ENCODE measurements at regions of chr3 and their contacts with region 1.

Region 1: GRCh38 chr3:188788621-188789081 is 383.1 kb upstream of the TPRG1 start:
- DNase-seq: peak; percentile 49
- H3K4me3 Mint-ChIP-seq: no peak overlapping the region
- H3K27ac Mint-ChIP-seq: no peak overlapping the region
- H3K4me1 Mint-ChIP-seq: peaks cover 6% of the 10 kb centered on the region
- H3K27me3 Mint-ChIP-seq: peaks cover 8% of the 10 kb centered on the region

Region 2: DNA sequence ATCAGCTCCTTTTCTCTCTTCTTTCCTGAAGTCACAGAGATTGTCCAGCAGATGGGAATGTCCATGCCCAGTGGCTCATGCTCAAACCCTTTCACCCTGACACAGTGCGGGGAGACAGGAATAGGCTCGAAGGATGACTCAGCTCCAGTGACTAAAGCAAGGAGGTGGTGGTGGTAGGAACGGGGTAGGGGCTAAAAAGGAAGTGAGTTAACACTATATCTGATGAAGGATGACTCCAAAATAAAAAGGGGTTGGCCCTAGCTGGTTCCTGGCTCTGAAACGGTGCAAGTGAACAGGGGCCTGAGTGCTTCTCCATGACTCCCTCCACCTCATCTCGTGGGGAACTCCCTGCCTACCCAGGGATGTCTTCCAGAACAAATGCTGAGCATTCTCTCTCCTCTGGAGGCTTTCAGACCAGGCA is 802.1 kb before region 1 on chr3:
- intact Hi-C with region 1: loop called (anchors 5 kb)
- DNase-seq: peak; percentile 34
- H3K4me3 Mint-ChIP-seq: peak overlapping the region; percentile 21
- H3K27ac Mint-ChIP-seq: peak overlapping the region; percentile 82
- H3K4me1 Mint-ChIP-seq: peaks cover 70% of the 10 kb centered on the region
- H3K27me3 Mint-ChIP-seq: no peaks in the 10 kb centered on the region

Region 3: GRCh38 chr3:188284455-188285212 is 504.0 kb before region 1 on chr3:
- intact Hi-C with region 1: loop called (anchors 1 kb)
- DNase-seq: peak; percentile 26
- H3K4me3 Mint-ChIP-seq: peak overlapping the region; percentile 57
- H3K27ac Mint-ChIP-seq: peak overlapping the region; percentile 90
- H3K4me1 Mint-ChIP-seq: peaks cover 55% of the 10 kb centered on the region
- H3K27me3 Mint-ChIP-seq: peaks cover 2% of the 10 kb centered on the region

Region 4: DNA sequence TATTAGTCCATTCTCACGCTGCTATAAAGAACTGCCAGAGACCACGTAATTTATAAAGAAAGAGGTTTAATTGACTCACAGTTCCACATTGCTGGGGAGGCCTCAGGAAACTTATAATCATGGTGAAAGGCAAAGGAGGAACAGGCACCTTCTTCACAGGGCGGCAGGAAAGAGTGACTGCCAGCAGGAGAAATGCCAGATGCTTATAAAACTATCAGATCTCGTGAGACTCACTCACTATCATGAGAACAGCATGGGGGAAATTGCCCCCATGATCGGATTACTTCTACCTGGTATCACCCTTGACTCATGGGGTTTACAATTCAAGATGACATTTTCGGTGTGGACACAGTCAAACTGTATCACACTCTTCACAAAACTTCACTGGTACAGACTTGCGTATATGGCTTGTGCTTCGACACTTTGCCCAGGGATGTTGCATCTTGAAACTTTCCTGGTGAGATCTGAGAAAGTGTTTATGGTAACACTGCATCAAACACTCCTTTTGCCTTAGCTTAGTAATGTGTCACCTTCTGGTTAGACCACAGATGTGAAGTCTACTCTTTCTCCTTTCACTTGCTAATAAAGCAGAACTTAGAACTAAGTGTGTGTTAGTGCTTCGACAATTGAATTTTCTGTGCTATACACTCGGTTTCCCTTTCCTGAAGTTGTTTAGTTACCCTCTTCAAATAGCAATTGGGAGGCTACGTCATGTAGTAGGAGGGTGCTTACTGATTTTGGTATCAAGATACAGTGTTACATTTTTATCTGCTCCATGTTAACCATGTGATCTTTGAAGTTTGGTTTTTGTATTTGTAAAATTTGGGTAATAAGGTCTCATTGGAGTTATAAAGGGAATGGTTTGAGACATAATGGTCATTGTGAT is 449.0 kb before region 1 on chr3:
- intact Hi-C with region 1: loop called (anchors 1 kb)
- DNase-seq: peak; percentile 39
- H3K4me3 Mint-ChIP-seq: peak overlapping the region; percentile 63
- H3K27ac Mint-ChIP-seq: peak overlapping the region; percentile 86
- H3K4me1 Mint-ChIP-seq: peaks cover 37% of the 10 kb centered on the region
- H3K27me3 Mint-ChIP-seq: peaks cover 24% of the 10 kb centered on the region

Region 5: GRCh38 chr3:188683032-188683521 is 105.6 kb before region 1 on chr3:
- intact Hi-C with region 1: loop called (anchors 1 kb)
- DNase-seq: no peak
- H3K4me3 Mint-ChIP-seq: no peak overlapping the region
- H3K27ac Mint-ChIP-seq: peak overlapping the region; percentile 74
- H3K4me1 Mint-ChIP-seq: peaks cover 28% of the 10 kb centered on the region
- H3K27me3 Mint-ChIP-seq: no peaks in the 10 kb centered on the region

Region 6: DNA sequence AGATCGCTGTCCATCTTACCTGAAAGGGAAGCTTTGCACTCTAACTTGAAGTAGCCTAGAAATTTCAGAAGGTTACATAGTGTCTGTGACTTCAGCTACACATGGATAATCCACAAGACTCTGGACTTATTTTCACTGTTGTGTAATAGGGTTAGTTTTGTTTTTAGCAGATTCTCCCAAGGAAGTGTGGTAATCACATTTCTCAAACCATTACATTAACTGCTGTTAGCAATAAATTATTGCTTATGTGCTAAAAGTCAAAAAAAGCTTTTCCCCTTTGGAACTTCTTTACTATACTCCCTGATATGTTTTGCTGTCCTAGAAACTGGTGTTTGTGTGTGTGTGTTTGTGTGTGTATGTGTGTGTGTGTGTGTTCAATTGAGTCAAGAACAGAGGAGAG is 31.3 kb after region 1 on chr3:
- intact Hi-C with region 1: no loop called
- DNase-seq: no peak
- H3K4me3 Mint-ChIP-seq: no peak overlapping the region
- H3K27ac Mint-ChIP-seq: no peak overlapping the region
- H3K4me1 Mint-ChIP-seq: no peaks in the 10 kb centered on the region
- H3K27me3 Mint-ChIP-seq: peaks cover 2% of the 10 kb centered on the region

Region 7: DNA sequence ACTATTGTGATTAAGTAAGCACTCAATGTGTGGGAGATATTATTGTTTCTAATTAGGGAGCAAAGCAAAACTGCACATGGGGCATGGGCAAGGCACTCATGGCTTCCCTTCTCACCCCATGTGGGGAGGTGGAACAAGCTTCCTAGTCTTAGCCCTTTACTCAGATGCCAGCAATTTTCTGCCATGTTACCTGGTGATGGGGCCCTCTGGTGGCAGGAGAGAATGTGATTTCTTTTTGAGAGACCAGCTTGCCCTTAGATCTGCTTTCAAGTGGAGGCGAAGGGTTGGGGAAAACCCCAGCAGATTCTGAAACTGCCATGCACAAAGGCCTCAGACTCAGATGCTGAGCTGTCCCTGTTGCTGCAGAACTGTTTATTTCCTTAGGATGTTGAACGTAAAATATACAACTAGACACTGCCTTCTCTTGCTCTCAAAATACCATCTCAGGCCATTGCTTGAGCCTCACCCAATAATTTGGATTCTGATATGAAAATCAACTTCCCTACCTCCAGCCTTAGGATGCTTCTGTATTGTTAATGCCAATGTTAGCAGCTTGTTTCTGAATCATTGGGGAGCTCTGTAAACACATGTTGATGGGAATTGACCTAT is 252.9 kb after region 1 on chr3:
- intact Hi-C with region 1: loop called (anchors 1 kb)
- DNase-seq: peak; percentile 75
- H3K4me3 Mint-ChIP-seq: no peak overlapping the region
- H3K27ac Mint-ChIP-seq: no peak overlapping the region
- H3K4me1 Mint-ChIP-seq: peaks cover 56% of the 10 kb centered on the region
- H3K27me3 Mint-ChIP-seq: peaks cover 4% of the 10 kb centered on the region